HEK293T (cell line): ENCODE measurements at regions of chr6 and their contacts with region 1.

Region 1: DNA sequence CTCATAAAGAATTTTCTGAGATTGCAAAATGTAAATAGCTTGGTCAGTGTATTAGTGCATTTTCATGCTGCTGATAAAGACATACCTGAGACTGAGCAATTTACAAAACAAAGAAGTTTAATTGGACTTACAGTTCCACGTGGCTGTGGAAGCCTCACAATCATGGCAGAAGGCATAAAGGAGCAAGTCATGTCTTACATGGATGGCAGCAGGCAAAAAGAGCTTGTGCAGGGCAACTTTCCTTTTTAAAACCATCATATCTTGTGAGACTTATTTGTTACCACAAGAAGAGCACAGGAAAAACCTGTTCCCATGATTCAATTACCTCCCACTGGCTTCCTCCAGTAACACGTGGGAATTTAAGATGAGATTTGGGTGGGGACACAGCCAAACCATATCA is 112.7 kb upstream of the HDDC2 start:
- DNase-seq: no peak

Region 2: GRCh38 chr6:125170376-125170775 is 244.1 kb before region 1 on chr6:
- CTCF ChIA-PET with region 1: no interaction called
- POLR2A ChIA-PET with region 1: no interaction called
- DNase-seq: no peak

Region 3: DNA sequence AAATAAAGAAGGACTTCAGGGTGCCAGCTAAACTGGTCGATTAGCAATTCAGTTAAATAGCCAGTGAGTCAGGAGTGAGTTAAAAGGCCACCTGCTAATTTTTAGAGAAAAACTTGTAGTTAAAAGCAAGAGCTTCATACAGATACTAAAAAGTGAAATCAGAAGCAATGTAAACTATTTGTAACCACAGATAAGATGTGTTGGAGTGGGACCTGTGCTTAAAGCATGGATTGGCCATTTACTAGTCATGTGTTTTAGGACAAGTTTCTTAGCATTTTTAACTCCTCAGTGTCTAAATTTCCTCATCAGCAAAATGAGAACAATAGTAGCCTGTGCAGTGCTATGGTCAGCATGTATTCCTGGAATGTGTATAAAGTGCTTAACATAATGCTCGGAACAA is 88.9 kb before region 1 on chr6:
- CTCF ChIA-PET with region 1: interaction called, 10 read pairs
- POLR2A ChIA-PET with region 1: no interaction called
- DNase-seq: no peak